Gastrocnemius medialis (tissue), 4 donors: ENCODE measurements at regions of chr2 and their contacts with region 1.

Region 1: DNA sequence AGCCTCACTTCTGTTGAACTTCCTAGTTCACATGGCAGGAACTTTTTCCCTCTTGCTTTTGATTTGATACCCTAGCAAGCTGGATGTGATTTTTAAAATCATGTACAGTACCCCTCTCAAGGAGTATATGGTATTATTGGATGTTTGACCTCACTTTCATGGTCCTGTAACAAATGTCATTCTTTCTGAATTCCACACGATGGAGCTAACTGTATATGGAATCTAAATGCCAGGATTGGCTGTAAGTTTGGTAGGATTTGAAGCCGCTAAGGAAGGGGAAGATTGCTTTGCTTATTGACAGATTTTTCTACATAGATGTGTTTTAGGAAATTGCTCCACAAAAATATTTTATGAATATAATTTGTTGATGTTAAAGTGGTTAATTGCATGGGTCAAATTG is 18.3 kb downstream of the MAIP1 start:
- DNase-seq: no peak
- ATAC-seq: no peak
- H3K4me3 ChIP-seq: no peak overlapping the region
- H3K27ac ChIP-seq: no peak overlapping the region
- H3K4me1 ChIP-seq: no peaks in the 10 kb centered on the region
- H3K27me3 ChIP-seq: no peaks in the 10 kb centered on the region
- CTCF ChIP-seq: peak in 4 of 5 experiments; percentile 13 to 30 (median 20)
- POLR2A ChIP-seq: no peak

Region 2: GRCh38 chr2:201196003-201196402 is 1222.3 kb after region 1 on chr2:
- in situ Hi-C with region 1: no loop called
- intact Hi-C with region 1: loop called (anchors 5 kb)
- DNase-seq: no peak
- ATAC-seq: no peak
- H3K4me3 ChIP-seq: no peak overlapping the region
- H3K27ac ChIP-seq: no peak overlapping the region
- H3K4me1 ChIP-seq: no peaks in the 10 kb centered on the region
- H3K27me3 ChIP-seq: no peaks in the 10 kb centered on the region
- CTCF ChIP-seq: no peak
- POLR2A ChIP-seq: no peak